Activated CD4-positive, alpha-beta T cell treated with anti-CD3 and anti-CD28 coated beads, Interleukin-2, amount 10 ng/mL, durations not matched to agents 24 days and 14 days (primary cell): ENCODE measurements at regions of chr5 and their contacts with region 1.

Region 1: GRCh38 chr5:40688127-40688761 is 8.5 kb downstream of the PTGER4 start:
- DNase-seq: peak; percentile 95
- H3K4me3 Mint-ChIP-seq: peak overlapping the region; percentile 99
- H3K27ac Mint-ChIP-seq: peak overlapping the region; percentile 92
- H3K4me1 Mint-ChIP-seq: peaks cover 62% of the 10 kb centered on the region
- H3K27me3 Mint-ChIP-seq: no peaks in the 10 kb centered on the region

Region 2: DNA sequence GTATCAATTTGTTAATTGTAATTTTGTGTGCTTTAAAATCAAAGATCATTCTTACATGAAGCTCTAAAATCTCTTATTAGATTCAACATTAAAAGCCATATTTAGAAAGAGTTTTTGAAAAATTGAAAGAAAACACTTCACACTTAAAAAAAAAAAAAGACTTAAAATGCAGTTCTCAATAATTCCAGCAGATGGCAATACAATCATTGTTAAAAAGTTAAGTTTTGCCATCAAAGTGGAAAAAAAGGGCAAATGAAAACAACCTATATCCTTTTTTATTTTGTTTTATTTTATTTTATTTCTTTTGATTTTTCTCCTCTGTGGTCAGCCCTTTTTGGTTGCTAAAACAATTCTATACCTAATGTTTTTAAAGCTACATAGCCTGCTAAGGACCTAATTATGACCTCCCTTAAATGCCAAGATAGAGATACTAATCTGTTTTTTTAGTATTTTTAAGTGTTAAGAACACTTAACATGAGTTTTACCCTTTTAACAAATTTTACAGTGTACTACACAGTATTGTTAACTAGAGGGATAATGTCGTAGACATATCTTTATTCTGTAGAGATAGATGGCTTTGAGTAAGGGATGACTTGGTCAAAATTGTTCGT is 1109.3 kb before region 1 on chr5:
- intact Hi-C with region 1: loop called (anchors 2 kb)
- DNase-seq: no peak
- H3K4me3 Mint-ChIP-seq: no peak overlapping the region
- H3K27ac Mint-ChIP-seq: no peak overlapping the region
- H3K4me1 Mint-ChIP-seq: peaks cover 6% of the 10 kb centered on the region
- H3K27me3 Mint-ChIP-seq: peaks cover 19% of the 10 kb centered on the region

Region 3: GRCh38 chr5:40021007-40021406 is 667.2 kb before region 1 on chr5:
- intact Hi-C with region 1: loop called (anchors 2 kb)
- DNase-seq: no peak
- H3K4me3 Mint-ChIP-seq: no peak overlapping the region
- H3K27ac Mint-ChIP-seq: no peak overlapping the region
- H3K4me1 Mint-ChIP-seq: peaks cover 3% of the 10 kb centered on the region
- H3K27me3 Mint-ChIP-seq: no peaks in the 10 kb centered on the region

Region 4: GRCh38 chr5:40277161-40277906 is 410.9 kb before region 1 on chr5:
- intact Hi-C with region 1: loop called (anchors 1 kb)
- DNase-seq: peak; percentile 77
- H3K4me3 Mint-ChIP-seq: peak overlapping the region; percentile 72
- H3K27ac Mint-ChIP-seq: peak overlapping the region; percentile 96
- H3K4me1 Mint-ChIP-seq: peaks cover 43% of the 10 kb centered on the region
- H3K27me3 Mint-ChIP-seq: no peaks in the 10 kb centered on the region

Region 5: DNA sequence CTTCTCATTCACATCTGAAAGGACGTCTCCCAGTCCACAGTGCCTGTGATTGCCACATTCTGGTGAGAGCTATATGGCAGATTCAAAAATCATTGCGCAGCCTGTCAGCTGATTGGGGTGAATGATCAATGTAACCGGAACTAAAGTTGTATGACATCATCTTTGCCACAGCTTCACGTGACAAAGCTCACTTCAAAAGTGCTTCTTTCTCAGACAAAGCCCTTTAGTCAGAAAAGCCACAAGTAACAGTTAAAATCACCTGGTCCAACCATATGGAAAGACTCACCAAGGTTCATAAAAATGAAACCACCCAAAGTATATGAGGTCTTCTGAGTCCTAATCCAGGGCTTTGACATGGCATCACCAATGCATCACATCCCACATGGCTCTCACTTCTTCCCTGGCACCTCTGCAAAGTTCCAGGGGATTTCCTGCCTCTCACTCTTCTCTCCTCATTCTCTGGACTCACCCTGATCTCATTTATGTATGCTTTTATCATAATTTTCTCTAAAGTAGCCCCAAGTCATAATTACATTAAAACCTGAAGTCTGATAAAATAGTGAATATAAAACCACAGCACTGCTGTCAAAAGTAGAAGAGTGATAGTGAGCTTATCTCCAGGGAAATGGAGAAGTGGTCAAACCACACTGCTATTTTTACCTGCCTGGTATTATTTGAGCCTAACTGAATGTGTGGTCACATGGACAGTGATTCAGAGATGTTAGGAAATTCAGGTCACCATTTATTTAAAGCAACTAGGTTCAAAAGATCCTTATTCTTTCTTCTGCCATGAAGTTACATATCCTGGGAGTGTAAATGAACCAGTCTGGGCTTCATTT is 201.6 kb before region 1 on chr5:
- intact Hi-C with region 1: loop called (anchors 1 kb)
- DNase-seq: peak; percentile 89
- H3K4me3 Mint-ChIP-seq: peak overlapping the region; percentile 45
- H3K27ac Mint-ChIP-seq: peak overlapping the region; percentile 89
- H3K4me1 Mint-ChIP-seq: peaks cover 55% of the 10 kb centered on the region
- H3K27me3 Mint-ChIP-seq: no peaks in the 10 kb centered on the region

Region 6: GRCh38 chr5:40634154-40634553 is 54.1 kb before region 1 on chr5:
- intact Hi-C with region 1: no loop called
- DNase-seq: no peak
- H3K4me3 Mint-ChIP-seq: no peak overlapping the region
- H3K27ac Mint-ChIP-seq: no peak overlapping the region
- H3K4me1 Mint-ChIP-seq: peaks cover 2% of the 10 kb centered on the region
- H3K27me3 Mint-ChIP-seq: no peaks in the 10 kb centered on the region

Region 7: DNA sequence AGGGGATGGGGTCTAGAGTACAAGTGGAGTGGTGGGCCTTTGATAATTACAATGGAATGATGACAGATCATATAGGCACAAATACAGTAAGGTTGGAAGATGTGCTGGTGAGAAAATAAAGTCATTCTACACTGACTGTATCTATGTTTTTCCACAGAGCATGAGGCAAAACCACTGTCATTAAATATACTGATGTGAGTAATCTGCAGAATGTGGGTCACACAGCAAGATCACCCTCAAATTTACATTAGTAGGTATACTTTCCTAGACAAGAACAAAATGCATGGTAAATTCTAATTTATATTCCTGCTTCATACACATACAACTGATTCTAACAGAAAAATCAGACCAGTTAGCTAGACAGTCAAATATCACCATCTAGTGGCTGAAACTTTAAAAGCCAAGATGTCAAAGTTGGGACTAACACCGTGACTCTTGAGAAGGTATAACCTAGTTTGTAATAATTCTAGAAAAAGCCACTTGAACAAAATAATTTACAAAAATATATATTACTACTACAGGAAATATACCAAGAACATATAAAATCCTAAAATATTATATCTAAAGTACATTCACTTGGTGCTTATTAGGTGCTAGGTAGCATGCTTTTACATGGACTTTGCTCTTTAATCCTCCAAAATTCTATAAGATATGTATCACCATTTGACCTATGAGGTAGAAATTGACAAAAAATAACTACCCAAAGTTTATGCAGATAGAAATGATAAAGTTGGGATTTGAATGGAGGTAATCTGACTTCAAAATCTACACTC is 48.0 kb after region 1 on chr5:
- intact Hi-C with region 1: loop called (anchors 1 kb)
- DNase-seq: peak; percentile 77
- H3K4me3 Mint-ChIP-seq: no peak overlapping the region
- H3K27ac Mint-ChIP-seq: peak overlapping the region; percentile 12
- H3K4me1 Mint-ChIP-seq: peaks cover 18% of the 10 kb centered on the region
- H3K27me3 Mint-ChIP-seq: no peaks in the 10 kb centered on the region

Region 8: GRCh38 chr5:41122459-41122858 is 434.2 kb after region 1 on chr5:
- intact Hi-C with region 1: no loop called
- DNase-seq: no peak
- H3K4me3 Mint-ChIP-seq: no peak overlapping the region
- H3K27ac Mint-ChIP-seq: no peak overlapping the region
- H3K4me1 Mint-ChIP-seq: no peaks in the 10 kb centered on the region
- H3K27me3 Mint-ChIP-seq: no peaks in the 10 kb centered on the region